ENCODE measurements at regions of chr11 and their contacts with region 1.

Region 1: GRCh38 chr11:76152086-76152681 is 54.1 kb downstream of the WNT11 start:
- DNase-seq: peak; percentile 63 to 88 (median 83)
- H3K4me3 ChIP-seq: peak overlapping the region in 57 of 59 donors; percentile 22 to 73 (median 53)
- H3K27ac ChIP-seq: peak overlapping the region in 4 of 59 donors; percentile 3 to 74 (median 34)
- H3K27me3 ChIP-seq: no peaks in the 10 kb centered on the region
- CTCF ChIP-seq: peak; percentile 77 to 99 (median 94)

Region 2: GRCh38 chr11:75214411-75214821 is 937.8 kb before region 1 on chr11:
- intact Hi-C with region 1: no loop called
- DNase-seq: peak in 4 of 10 donors; percentile 12 to 49 (median 24)
- H3K4me3 ChIP-seq: no peak overlapping the region
- H3K27ac ChIP-seq: no peak overlapping the region
- H3K27me3 ChIP-seq: peaks cover 0 to 5% (median 0%) of the 10 kb centered on the region in 45 donors
- CTCF ChIP-seq: peak in 13 of 56 donors; percentile 11 to 42 (median 20)

Region 3: DNA sequence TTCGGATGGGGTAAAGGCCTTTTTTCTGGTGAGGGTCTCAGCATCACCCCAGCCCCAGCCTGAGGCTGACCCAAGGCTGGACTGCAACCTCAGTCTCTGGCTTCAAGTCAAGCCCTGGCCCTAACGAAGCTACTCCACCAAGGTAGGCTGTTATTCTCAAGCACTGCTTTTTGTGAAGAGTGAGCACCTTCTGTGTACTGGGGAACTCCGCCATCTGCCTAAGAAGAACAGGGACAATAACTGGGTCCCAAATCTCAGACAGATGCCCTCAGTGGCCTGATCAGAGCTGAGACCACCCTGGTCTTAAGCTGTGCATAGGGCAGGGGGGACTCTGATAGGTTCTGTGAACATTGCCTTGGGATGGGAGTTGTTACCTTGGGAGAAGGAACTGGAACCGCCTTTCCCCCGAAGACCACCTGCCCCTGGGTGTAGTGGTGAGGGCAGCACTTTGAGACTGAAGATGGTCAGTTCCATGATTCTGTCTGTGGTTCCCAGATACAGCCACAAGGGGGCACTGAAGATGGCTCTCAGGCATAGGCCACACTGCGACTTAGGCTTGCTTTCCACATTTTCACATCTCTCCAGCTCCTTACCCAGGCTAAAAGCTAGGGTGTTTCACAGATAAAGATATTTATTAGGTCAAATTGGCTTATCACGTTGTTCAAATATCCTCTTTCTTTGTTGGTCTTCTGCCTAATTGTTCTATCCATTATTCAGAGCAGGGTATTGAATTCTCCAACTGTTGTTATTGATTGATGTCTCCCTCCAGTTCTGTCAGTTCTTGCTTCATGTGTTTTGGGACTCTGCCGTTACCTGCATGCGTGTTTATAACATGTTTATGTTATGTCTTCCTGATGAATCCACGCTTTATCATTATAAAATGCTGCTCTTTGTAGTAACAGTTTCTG is 349.0 kb before region 1 on chr11:
- intact Hi-C with region 1: loop called (anchors 5 kb)
- DNase-seq: peak; percentile 61 to 92 (median 80)
- H3K4me3 ChIP-seq: peak overlapping the region in 1 of 59 donors; percentile 1
- H3K27ac ChIP-seq: peak overlapping the region in 50 of 59 donors; percentile 3 to 81 (median 47)
- H3K27me3 ChIP-seq: no peaks in the 10 kb centered on the region
- CTCF ChIP-seq: peak; percentile 72 to 98 (median 95)

Region 4: GRCh38 chr11:75888416-75888815 is 263.8 kb before region 1 on chr11:
- intact Hi-C with region 1: loop called in 1 of 2 experiments (anchors 2 kb)
- DNase-seq: no peak
- H3K4me3 ChIP-seq: no peak overlapping the region
- H3K27ac ChIP-seq: peak overlapping the region in 12 of 59 donors; percentile 1 to 73 (median 20)
- H3K27me3 ChIP-seq: no peaks in the 10 kb centered on the region
- CTCF ChIP-seq: no peak

Region 5: DNA sequence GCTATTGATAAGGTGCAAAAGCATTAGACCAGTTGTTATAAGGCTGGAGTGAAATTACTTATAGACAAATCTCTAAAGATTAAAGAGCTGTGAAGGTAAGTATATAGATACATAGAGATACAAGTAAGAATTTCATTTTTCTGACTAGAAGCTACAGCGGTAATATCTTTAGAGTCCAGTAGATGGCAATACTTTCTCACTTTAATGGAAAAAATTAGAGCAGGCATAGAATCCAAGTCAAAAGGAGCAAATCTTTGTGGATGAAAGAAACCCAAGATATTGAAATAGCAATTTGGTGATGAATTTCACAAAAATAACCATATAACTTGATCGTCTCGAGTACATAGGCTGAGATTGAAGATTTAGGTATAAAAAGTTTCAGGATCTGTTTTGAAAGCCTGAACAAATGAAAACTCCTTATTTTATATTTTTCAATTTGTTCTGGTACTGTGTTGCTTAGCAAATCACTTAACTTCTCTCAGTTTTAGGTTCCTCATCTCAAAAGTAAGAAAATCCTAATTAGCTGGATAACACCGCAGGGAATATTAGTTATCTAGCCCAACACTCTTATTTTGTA is 255.3 kb before region 1 on chr11:
- intact Hi-C with region 1: loop called (anchors 2 kb)
- DNase-seq: no peak
- H3K4me3 ChIP-seq: no peak overlapping the region
- H3K27ac ChIP-seq: peak overlapping the region in 26 of 59 donors; percentile 1 to 73 (median 43)
- H3K27me3 ChIP-seq: no peaks in the 10 kb centered on the region
- CTCF ChIP-seq: peak; percentile 66 to 96 (median 85)

Region 6: DNA sequence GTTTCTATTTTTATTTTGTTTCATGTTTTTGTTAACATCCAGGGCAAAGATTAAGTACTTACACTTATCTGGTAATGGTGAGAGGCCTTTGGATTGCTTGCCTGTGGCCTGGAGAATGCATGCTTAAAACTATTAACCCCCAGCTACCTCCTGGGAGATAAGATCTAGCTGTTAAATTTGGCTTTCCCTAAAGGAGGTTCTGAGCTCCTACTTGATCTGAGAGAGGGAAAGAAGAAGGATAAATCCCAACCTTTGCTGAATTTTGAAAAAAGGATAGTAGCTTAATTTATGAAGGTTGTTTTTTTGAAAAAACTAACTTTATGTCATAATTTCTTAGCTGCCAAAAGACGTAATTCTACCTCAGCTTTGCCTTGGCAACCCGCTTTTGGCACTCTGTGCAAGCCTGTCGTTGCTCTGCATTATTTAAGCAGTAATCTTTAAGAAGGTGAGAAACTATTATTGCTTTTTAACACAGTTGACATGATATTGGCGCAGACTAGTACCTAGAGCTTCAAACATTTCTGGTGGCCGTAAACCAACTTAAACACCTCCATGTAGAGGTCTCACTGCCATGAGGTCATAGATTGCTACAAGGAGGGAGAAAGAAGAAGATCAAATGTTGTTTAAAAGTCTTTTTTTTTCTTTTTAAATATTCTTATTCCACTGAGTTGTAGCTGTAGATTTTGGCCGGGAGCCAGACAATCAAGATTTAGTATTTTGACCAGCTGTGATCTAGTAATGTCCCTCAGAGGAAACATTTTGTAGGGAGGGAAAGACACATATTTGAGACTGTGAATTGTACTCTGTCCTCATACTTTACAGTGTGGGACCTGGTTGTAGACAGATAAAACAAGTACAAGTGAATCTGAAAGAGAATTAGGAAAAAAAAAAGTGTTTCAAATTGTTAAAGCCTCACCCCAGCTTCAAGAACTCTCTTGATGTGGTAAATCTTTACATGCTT is 20.2 kb before region 1 on chr11:
- intact Hi-C with region 1: no loop called
- DNase-seq: no peak
- H3K4me3 ChIP-seq: no peak overlapping the region
- H3K27ac ChIP-seq: peak overlapping the region in 33 of 59 donors; percentile 7 to 65 (median 37)
- H3K27me3 ChIP-seq: no peaks in the 10 kb centered on the region
- CTCF ChIP-seq: no peak

Region 7: DNA sequence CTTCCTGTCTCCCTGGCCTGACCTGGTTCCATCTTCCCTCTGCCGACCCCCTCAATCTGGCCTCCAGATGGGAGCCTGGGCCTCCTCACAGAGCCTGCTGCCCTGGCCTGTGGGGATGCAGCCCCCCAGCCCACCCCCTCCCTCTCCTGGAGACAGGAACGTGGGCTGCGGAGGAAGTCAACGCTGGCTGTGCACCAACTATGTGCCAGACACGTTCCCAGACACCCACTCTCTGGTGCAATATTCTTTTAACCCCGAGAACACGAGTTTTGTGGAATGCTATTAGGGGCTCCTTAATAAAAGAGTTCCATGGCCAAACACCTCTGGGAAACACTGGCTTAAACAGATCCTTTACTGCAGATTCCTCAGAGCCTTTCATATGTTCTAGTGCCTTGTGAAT is 38.2 kb after region 1 on chr11:
- intact Hi-C with region 1: no loop called
- DNase-seq: no peak
- H3K4me3 ChIP-seq: no peak overlapping the region
- H3K27ac ChIP-seq: no peak overlapping the region
- H3K27me3 ChIP-seq: peaks cover 0 to 2% (median 0%) of the 10 kb centered on the region in 45 donors
- CTCF ChIP-seq: no peak

Region 8: DNA sequence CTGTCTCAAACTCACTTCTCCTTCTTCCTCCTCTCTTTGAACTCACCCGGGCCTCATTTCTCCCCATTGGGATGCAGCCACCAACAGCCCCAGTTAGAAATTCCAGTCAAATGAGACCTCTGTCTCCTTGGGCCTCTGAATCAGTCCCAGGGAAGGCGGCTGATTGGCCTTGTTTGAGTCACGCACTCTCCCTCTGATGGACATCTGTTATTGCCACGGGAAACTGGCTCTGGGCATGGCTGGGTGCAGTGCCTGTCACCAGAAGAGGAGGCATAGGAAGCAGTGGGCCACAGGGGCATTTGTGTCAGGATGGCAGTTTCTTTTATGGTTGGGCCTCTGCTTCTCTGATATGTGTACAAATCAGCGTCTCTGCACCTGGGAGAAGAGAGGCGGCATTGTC is 63.8 kb after region 1 on chr11:
- intact Hi-C with region 1: no loop called
- DNase-seq: no peak
- H3K4me3 ChIP-seq: no peak overlapping the region
- H3K27ac ChIP-seq: peak overlapping the region in 4 of 59 donors; percentile 11 to 46 (median 37)
- H3K27me3 ChIP-seq: peaks cover 0 to 3% (median 0%) of the 10 kb centered on the region in 45 donors
- CTCF ChIP-seq: no peak

Measured in dorsolateral prefrontal cortex (tissue), 120 donors.